MCF 10A (cell line): ENCODE measurements at regions of chr7 and their contacts with region 1.

Region 1: DNA sequence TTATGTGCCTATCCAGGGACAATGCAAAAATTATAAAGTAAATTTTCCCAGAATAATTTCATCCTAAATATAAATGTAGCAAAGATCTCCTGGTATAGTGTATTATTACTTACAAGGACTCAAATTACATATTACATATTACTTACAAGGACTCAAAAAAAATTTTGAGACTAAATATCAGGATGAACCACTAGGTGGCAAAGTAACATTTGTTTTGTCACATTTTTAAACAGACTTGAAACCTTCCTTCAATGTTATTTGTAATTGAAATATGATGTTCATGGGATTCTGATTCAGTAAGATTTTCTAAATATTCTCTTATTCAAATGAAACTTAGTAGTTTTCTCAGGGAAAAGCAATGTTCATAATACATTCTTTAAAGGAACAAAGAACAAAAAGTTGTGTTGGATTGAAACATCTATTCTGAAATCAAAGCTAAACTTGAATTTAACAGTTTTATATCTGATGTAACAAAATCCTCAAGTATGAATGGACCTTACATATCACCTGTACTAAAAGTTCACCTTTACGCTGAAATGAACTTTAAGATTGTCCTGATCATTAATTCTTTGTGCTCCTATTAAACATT is 74.3 kb upstream of the GNAI1 start:
- DNase-seq: peak; percentile 61
- H3K4me3 Mint-ChIP-seq: no peak overlapping the region
- H3K27ac Mint-ChIP-seq: no peak overlapping the region
- H3K4me1 Mint-ChIP-seq: no peaks in the 10 kb centered on the region
- H3K27me3 Mint-ChIP-seq: no peaks in the 10 kb centered on the region
- CTCF ChIP-seq: peak; percentile 46

Region 2: DNA sequence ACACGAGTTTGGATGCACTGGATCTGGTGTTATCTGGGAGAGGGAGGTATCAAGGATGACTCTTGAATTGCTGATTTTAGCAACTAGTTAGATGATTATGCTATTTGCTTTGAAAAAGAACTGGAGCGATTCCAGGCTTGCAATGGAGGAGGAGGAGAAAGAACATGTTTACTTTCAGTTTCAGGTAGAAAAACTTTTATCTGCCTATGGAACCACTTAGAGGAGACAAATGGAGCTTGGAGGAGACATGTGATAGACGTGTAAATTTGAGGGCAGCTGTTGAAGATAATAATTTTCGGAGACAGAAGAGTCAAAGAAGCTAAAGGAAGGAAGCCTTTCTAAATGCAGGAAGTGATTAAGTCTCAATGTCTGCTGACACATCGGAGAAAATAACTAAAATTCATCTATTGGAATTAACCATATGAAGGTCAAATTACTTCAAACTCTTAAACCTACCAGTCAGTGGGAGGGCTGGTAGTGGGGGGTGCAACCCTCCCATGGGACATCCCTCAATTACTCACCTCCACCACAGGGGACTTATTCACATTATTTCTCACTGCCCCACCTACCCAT is 17.9 kb after region 1 on chr7:
- CTCF ChIA-PET with region 1: interaction called, 11 read pairs
- POLR2A ChIA-PET with region 1: no interaction called
- intact Hi-C with region 1: no loop called
- DNase-seq: peak; percentile 21
- H3K4me3 Mint-ChIP-seq: peak overlapping the region; percentile 61
- H3K27ac Mint-ChIP-seq: peak overlapping the region; percentile 80
- H3K4me1 Mint-ChIP-seq: peaks cover 8% of the 10 kb centered on the region
- H3K27me3 Mint-ChIP-seq: no peaks in the 10 kb centered on the region
- CTCF ChIP-seq: no peak

Region 3: GRCh38 chr7:80095545-80095944 is 35.2 kb after region 1 on chr7:
- CTCF ChIA-PET with region 1: interaction called, 13 read pairs
- POLR2A ChIA-PET with region 1: no interaction called
- intact Hi-C with region 1: no loop called
- DNase-seq: peak; percentile 38
- H3K4me3 Mint-ChIP-seq: no peak overlapping the region
- H3K27ac Mint-ChIP-seq: no peak overlapping the region
- H3K4me1 Mint-ChIP-seq: no peaks in the 10 kb centered on the region
- H3K27me3 Mint-ChIP-seq: no peaks in the 10 kb centered on the region
- CTCF ChIP-seq: peak; percentile 37

Region 4: GRCh38 chr7:80165177-80165576 is 104.9 kb after region 1 on chr7:
- CTCF ChIA-PET with region 1: no interaction called
- POLR2A ChIA-PET with region 1: no interaction called
- intact Hi-C with region 1: no loop called
- DNase-seq: no peak
- H3K4me3 Mint-ChIP-seq: no peak overlapping the region
- H3K27ac Mint-ChIP-seq: no peak overlapping the region
- H3K4me1 Mint-ChIP-seq: peaks cover 7% of the 10 kb centered on the region
- H3K27me3 Mint-ChIP-seq: no peaks in the 10 kb centered on the region
- CTCF ChIP-seq: no peak

Region 5: GRCh38 chr7:80392229-80393169 is 332.2 kb after region 1 on chr7:
- CTCF ChIA-PET with region 1: interaction called, 7 read pairs
- POLR2A ChIA-PET with region 1: interaction called, 5 read pairs
- intact Hi-C with region 1: loop called (anchors 2 kb)
- DNase-seq: peak; percentile 38
- H3K4me3 Mint-ChIP-seq: no peak overlapping the region
- H3K27ac Mint-ChIP-seq: no peak overlapping the region
- H3K4me1 Mint-ChIP-seq: peaks cover 6% of the 10 kb centered on the region
- H3K27me3 Mint-ChIP-seq: no peaks in the 10 kb centered on the region
- CTCF ChIP-seq: peak; percentile 38

Region 6: DNA sequence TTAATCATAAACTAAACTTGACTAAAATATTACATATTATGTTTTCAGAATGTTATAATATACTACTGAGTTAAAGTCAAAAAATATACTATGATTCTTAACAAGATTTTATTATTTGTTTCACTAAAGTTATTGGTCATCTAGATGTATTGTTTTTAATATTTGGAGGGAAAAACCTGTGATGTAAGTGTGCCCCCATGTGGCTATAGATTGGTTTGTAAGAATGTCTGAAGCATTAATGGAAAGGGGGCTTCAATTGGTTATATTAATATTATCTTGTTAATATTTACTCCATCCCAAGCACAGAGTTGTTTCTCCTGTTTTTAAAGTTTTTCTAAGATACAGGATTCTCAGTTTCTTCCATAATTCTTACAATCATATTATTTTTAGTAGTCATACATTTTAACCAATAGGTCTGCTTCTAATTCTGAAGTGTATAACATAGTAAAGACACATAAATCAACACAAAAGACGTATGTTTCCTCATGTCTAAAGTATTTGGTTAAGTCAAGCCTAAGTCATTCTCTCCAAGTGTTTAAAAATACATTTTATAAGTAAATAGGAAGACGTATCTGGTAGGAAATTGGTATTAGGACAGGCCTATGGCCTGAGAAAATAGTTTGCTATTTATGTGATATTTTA is 393.5 kb after region 1 on chr7:
- CTCF ChIA-PET with region 1: interaction called, 5 read pairs
- POLR2A ChIA-PET with region 1: no interaction called
- intact Hi-C with region 1: loop called (anchors 1 kb)
- DNase-seq: peak; percentile 43
- H3K4me3 Mint-ChIP-seq: no peak overlapping the region
- H3K27ac Mint-ChIP-seq: no peak overlapping the region
- H3K4me1 Mint-ChIP-seq: peaks cover 4% of the 10 kb centered on the region
- H3K27me3 Mint-ChIP-seq: no peaks in the 10 kb centered on the region
- CTCF ChIP-seq: peak; percentile 52

Region 7: DNA sequence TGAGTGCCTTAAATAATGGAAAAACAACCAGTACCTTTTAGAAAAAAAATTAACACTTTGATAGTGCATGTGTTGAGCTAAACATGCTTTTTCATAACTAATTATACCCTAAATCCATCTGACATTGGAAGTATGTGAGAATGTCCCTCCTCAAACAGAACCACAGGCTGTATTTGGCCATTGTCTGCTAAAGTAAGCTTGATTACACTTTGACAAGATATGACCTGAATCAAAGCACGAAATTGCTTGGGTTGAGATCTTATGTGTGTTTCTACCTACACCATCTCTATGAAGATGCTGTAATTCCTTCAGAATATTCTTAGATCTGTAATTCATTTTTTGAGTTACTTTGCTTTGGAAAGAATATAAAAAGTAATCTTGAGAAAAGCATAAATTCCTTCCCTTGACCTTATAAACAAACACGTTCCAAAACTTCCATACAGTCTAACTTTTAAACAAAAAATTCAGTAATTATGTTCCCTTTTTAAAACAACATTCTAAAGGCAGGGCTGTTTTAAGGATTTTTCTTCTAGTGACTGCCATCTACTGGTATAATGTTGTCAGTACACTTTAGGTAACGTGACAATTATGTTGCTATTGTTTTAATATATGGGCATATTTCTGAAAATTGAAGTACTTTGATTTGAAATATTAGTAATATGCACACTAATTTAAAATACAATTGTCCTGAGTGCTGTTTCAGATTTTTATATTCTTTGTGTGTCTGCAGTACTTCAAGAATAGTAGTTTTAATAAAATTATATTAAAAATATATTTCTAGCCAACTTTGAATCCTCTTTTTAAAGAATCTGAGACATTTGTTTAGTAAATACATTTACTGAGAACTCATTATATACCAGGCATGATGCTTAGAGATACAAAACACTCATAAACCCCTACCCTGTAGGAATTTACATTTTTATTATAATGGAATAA is 599.1 kb after region 1 on chr7:
- CTCF ChIA-PET with region 1: no interaction called
- POLR2A ChIA-PET with region 1: no interaction called
- intact Hi-C with region 1: loop called (anchors 5 kb)
- DNase-seq: peak; percentile 56
- H3K4me3 Mint-ChIP-seq: no peak overlapping the region
- H3K27ac Mint-ChIP-seq: no peak overlapping the region
- H3K4me1 Mint-ChIP-seq: no peaks in the 10 kb centered on the region
- H3K27me3 Mint-ChIP-seq: no peaks in the 10 kb centered on the region
- CTCF ChIP-seq: peak; percentile 45

Region 8: GRCh38 chr7:80681272-80681885 is 621.1 kb after region 1 on chr7:
- CTCF ChIA-PET with region 1: interaction called, 8 read pairs
- POLR2A ChIA-PET with region 1: no interaction called
- intact Hi-C with region 1: loop called (anchors 10 kb)
- DNase-seq: peak; percentile 58
- H3K4me3 Mint-ChIP-seq: no peak overlapping the region
- H3K27ac Mint-ChIP-seq: no peak overlapping the region
- H3K4me1 Mint-ChIP-seq: no peaks in the 10 kb centered on the region
- H3K27me3 Mint-ChIP-seq: no peaks in the 10 kb centered on the region
- CTCF ChIP-seq: peak; percentile 39